Activated CD4-positive, alpha-beta T cell treated with anti-CD3 and anti-CD28 coated beads for 36 hours (primary cell): ENCODE measurements at regions of chr7 and their contacts with region 1.

Region 1: DNA sequence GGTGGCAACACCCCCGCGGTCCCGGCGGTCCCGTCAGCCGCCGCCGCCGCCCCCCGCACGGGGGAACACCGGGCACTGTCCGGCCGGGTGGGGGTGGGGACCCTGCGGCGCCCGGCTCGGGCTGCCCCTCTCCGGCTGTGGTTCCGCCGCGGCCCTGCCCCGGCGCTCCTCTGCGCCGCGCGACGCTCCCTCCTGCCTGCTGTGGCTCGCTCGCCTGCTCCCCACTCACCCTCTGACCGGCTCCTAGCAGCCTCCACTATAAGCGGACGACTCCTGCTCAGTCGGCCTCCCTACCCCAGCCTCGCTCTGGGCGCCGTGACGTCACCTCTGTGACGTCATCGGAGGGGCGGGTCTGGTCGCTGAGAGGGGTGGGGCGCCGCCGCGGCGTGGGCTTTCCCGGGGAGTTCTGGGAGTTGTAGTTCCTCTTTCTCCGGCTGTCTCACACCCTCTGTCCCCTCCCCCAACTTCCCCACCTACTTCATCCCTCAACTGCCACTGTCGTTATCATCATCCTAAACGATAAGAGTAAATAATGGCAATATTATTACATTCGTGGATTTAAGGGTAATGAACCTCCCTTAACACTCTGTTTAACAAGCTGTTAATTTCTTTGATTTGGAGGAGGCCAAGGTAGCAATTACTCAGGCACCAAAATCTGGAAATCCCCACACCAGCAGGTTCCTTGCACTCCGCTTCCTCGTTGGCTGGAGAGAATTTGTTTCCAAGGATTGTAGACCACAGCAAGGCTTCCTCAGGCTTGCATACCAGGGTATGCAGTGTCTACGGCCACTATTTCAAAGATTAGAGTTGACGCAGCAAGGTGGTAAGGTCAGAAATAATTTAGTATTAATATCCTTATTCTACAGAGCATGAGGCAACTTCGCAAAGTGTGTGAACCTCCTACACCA is at the start of gene UBE2H:
- DNase-seq: peak; percentile 96
- ATAC-seq: peak; percentile 66
- H3K4me3 Mint-ChIP-seq: no peak within 1 kb of the TSS
- H3K27ac Mint-ChIP-seq: peak within 1 kb of the TSS; percentile 99
- H3K4me1 Mint-ChIP-seq: peaks cover 8% of the 10 kb centered on the region
- H3K27me3 Mint-ChIP-seq: no peaks in the 10 kb centered on the region
- total RNA-seq, gene UBE2H: 25.6 to 40.7 TPM

Region 2: GRCh38 chr7:129327076-129327475 is 625.8 kb before region 1 on chr7:
- CTCF ChIA-PET with region 1: no interaction called
- POLR2A ChIA-PET with region 1: no interaction called
- intact Hi-C with region 1: no loop called
- DNase-seq: no peak
- ATAC-seq: no peak
- H3K4me3 Mint-ChIP-seq: no peak overlapping the region
- H3K27ac Mint-ChIP-seq: no peak overlapping the region
- H3K4me1 Mint-ChIP-seq: no peaks in the 10 kb centered on the region
- H3K27me3 Mint-ChIP-seq: no peaks in the 10 kb centered on the region

Region 3: GRCh38 chr7:129502376-129502776 is 450.5 kb before region 1 on chr7 and contains the start of gene SMKR1:
- CTCF ChIA-PET with region 1: no interaction called
- POLR2A ChIA-PET with region 1: no interaction called
- intact Hi-C with region 1: loop called in 1 of 2 experiments (anchors 2 kb)
- DNase-seq: peak; percentile 91
- ATAC-seq: peak; percentile 95
- H3K4me3 Mint-ChIP-seq: peak within 1 kb of the TSS; percentile 71
- H3K27ac Mint-ChIP-seq: peak within 1 kb of the TSS; percentile 73
- H3K4me1 Mint-ChIP-seq: peaks cover 11% of the 10 kb centered on the region
- H3K27me3 Mint-ChIP-seq: no peaks in the 10 kb centered on the region
- total RNA-seq, gene SMKR1: 2.3 to 2.7 TPM

Region 4: GRCh38 chr7:129611246-129612111 is 341.4 kb before region 1 on chr7 and contains the start of gene NRF1:
- CTCF ChIA-PET with region 1: interaction called, 3 read pairs
- POLR2A ChIA-PET with region 1: interaction called, 3 read pairs
- intact Hi-C with region 1: loop called (anchors 1 to 5 kb)
- DNase-seq: peak; percentile 96
- ATAC-seq: peak; percentile 87
- H3K4me3 Mint-ChIP-seq: peak within 1 kb of the TSS; percentile 90
- H3K27ac Mint-ChIP-seq: peak within 1 kb of the TSS; percentile 96
- H3K4me1 Mint-ChIP-seq: peaks cover 61% of the 10 kb centered on the region
- H3K27me3 Mint-ChIP-seq: no peaks in the 10 kb centered on the region
- total RNA-seq, gene NRF1: 20.5 to 28.9 TPM

Region 5: GRCh38 chr7:130050773-130051125 is 97.8 kb after region 1 on chr7:
- CTCF ChIA-PET with region 1: no interaction called
- POLR2A ChIA-PET with region 1: no interaction called
- intact Hi-C with region 1: loop called in 1 of 2 experiments (anchors 2 kb)
- DNase-seq: no peak
- ATAC-seq: no peak
- H3K4me3 Mint-ChIP-seq: peak overlapping the region; percentile 90
- H3K27ac Mint-ChIP-seq: peak overlapping the region; percentile 93
- H3K4me1 Mint-ChIP-seq: peaks cover 13% of the 10 kb centered on the region
- H3K27me3 Mint-ChIP-seq: no peaks in the 10 kb centered on the region

Region 6: DNA sequence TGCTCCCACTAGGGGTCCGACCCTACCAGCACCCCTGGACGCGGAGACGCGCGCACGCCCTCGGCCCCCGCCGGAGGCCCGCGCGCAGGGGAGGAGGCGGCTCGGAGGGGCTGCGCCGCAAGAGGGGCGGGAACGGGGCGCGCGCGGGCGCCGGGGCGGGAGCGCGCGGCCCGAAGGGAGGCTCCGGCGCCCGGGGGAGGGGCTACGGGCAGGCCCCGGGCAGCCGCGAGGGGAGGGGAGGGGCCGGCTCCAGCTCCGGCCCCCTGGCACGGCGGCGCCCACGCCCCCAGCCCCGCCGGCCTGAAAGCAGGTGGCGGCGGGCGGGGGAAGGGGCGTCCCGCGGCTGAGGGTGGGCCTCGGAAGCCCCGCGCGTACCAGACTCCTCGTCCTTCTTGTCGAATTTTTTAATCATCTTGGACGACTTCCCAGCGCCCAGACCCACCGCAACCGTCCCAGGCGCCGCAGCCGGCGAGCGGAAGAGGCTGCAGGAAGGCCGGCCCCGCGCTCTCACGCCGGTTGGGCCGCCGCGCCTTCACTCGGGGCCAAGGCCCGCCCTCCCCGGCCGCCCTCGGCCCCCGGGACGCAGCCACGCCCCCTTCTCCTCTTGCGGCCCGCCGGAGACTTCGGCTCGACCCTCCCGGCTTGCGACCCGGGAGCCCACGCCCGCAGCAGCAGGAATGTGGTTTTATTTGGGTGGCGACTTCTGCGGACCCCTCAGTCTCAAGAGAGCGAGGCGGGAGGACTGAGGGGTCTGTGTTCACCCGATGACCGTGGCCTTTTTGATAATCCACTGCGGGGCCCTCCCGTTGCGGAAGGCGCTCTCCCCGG is 715.6 kb after region 1 on chr7 and contains the start of gene COPG2:
- CTCF ChIA-PET with region 1: no interaction called
- POLR2A ChIA-PET with region 1: no interaction called
- intact Hi-C with region 1: loop called in 1 of 2 experiments (anchors 10 kb)
- DNase-seq: peak; percentile 86
- ATAC-seq: peak; percentile 97
- H3K4me3 Mint-ChIP-seq: peak within 1 kb of the TSS; percentile 81
- H3K27ac Mint-ChIP-seq: peak within 1 kb of the TSS; percentile 70
- H3K4me1 Mint-ChIP-seq: peaks cover 16% of the 10 kb centered on the region
- H3K27me3 Mint-ChIP-seq: peaks cover 5% of the 10 kb centered on the region
- total RNA-seq, gene COPG2: 23.5 to 25.9 TPM